ENCODE measurements at regions of chr14 and their contacts with region 1.

Region 1: DNA sequence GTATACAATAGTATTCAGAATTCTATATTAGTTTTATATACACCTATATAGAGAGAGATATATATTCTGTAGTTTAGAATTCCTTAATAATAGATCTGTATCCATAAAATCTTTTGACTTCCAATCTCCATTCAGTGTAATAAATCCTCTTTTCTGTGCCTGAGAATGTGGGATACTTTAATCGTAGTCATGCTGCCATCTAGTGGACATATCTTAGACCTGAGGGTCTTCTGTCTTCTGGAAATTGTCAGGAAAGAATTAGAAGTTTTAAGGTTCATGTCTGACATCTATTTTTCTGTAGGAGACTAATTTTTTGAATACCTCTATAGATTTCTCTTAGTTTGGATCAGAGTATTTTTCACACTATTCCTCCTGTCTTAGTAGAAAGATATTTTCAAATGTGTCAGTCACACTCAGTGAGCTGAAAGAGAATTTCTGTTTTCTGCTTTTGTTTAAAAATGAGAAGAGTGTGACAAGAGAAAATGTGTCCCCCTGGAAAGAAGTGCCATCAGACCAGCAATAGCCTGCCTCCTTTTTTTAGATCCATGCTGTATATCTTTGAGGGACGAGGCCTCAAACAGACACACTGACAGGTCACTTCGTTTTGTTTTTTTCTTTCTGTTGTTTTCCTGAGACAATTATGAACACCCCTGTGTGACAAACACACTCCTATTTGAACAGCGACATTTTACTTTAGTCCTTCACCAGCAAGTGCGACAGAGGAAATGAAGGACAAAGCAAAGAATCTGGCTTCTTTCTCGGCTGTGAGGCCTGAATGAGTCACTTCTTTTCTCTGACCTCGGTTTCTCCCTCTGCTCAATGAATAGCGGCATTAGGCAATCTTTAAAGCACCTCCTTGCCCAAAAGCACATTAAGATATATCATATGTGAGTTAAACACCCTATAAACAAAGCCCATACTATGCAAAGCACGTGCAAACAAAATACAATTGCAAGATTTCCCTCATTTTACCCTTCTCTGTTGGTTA is 96.3 kb downstream of the GALC start:
- DNase-seq: no peak
- H3K4me3 ChIP-seq: no peak overlapping the region
- H3K27ac ChIP-seq: no peak overlapping the region
- H3K4me1 ChIP-seq: no peaks in the 10 kb centered on the region
- H3K27me3 ChIP-seq: peaks cover 34% of the 10 kb centered on the region
- CTCF ChIP-seq: peak; percentile 83

Region 2: GRCh38 chr14:87805315-87805723 is 91.4 kb before region 1 on chr14:
- intact Hi-C with region 1: loop called (anchors 5 kb)
- DNase-seq: peak; percentile 15
- H3K4me3 ChIP-seq: no peak overlapping the region
- H3K27ac ChIP-seq: no peak overlapping the region
- H3K4me1 ChIP-seq: no peaks in the 10 kb centered on the region
- H3K27me3 ChIP-seq: no peaks in the 10 kb centered on the region
- CTCF ChIP-seq: peak; percentile 67

Region 3: GRCh38 chr14:88078525-88078924 is 181.8 kb after region 1 on chr14:
- intact Hi-C with region 1: no loop called
- DNase-seq: no peak
- H3K4me3 ChIP-seq: no peak overlapping the region
- H3K27ac ChIP-seq: no peak overlapping the region
- H3K4me1 ChIP-seq: no peaks in the 10 kb centered on the region
- H3K27me3 ChIP-seq: no peaks in the 10 kb centered on the region
- CTCF ChIP-seq: no peak

Measured in left ventricle myocardium inferior (tissue), 1 donor.